ENCODE measurements at regions of chr11 and their contacts with region 1.

Region 1: GRCh38 chr11:62787005-62787759 is at the start of gene TMEM179B:
- DNase-seq: peak; percentile 94
- H3K27ac ChIP-seq: peak within 1 kb of the TSS; percentile 99
- CTCF ChIP-seq: peak; percentile 11

Region 2: DNA sequence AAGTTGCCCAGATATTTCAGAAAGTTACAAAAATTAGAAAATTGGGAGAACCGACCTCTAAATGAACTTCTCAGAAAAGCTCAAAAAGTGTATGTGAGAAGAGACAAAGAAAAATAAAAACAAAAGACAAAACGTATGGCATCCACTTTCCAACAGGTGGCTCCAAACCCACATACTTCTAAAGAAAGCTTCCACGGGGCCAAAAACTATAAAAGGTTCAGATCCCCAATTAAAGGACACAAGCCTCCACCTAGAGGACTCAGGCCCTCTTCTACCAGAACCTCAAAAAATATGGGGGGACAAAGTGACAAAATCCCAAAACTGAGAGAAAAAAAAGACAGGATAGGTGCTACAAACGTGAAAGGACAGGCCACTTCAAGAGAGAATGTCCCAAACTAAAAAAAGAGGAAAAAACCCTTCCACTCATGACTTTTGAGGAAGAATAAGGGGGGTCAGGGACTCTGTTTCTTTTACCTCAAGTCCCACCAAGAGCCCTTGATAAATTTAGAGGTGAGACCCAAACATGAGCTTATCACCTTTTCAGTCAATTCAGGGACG is 569.9 kb before region 1 on chr11:
- CTCF ChIA-PET with region 1: no interaction called
- POLR2A ChIA-PET with region 1: no interaction called
- DNase-seq: peak; percentile 37
- H3K27ac ChIP-seq: no peak overlapping the region
- CTCF ChIP-seq: peak; percentile 45

Region 3: DNA sequence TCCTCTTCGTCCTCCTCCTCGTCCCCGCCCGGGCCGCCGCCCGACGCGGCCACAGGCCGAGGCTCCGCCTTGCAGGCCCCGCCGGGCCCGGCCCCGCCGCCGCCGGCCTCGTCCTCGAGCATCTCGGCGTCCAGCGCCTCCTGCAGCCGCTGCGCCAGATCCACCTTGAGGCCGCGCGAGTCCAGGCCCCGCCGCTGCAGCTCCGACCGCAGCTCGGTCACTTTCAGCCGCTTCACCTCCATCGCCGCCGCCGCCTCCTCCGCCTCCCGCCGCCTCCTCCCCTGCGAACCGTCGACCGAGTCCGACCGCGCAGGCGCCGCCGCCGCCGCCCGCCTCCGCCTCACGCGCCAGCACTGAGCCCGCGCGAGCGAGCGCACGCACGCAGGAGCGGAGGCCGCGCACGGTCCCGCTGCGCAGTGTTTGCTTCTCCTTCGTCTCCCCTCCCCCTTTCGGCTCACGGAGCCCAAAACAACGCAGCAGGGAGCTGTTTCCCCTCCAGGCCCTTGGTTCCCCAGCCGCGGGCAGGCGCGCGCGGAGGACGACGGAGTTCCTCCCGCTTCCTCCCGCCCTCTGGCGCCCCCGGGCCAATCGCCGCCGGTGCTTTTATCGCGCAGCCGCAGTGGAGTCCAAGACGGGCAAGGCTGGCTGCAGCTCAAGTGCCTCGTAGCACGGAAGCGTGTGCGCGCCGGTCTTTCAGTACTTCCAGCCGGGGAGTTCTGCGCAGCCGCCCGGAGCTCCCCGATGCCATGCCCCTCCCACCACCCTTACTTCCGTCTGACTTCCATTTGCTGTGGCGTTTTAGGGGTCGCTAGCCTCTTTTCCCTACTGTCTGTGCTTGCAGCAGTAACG is 60.0 kb before region 1 on chr11 and contains the start of gene HNRNPUL2:
- CTCF ChIA-PET with region 1: interaction called, 16 read pairs
- POLR2A ChIA-PET with region 1: no interaction called
- DNase-seq: peak; percentile 99
- H3K27ac ChIP-seq: peak within 1 kb of the TSS; percentile 99
- CTCF ChIP-seq: no peak

Region 4: DNA sequence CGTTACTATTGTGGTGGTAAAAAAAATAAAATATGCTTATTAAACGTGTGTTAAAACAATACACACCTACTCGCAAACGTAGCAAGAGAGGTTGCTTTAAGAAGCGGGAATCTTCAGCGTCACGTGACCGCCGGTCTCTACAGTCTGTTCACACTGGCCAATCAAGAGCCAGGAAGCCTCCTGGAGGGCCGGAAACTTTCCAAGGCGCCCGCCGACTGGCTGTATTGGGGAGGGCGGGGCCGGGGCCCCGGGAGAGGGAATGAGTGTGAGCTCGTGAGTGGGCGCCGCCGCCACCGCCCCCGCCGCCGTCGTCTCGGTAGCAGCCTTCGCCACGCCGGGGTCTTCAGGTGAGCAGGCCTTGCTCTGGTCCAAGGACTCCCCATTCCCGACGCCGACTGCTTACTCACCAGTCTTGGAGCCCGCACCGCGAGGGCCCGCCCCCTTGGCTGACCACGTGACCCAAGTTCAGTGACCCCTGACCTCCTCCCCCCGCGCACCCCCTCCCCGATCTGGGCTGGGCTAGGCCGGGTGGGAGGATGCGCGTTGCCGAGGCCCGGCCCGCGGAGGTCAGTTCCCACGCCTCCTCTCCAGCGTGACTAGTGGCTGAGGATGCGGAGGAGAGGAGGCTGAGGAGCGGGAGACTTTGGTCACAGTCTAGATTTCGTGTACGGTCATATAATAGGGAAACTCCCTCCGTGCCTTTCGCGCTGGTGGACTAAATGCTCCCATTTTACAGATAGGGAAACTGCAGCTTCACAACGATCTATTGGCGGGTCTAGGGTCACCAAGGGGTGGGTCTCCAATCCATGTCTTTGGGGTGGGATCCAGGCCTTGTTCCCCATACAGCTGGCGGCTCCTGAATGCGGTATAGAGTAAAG is 15.8 kb before region 1 on chr11 and contains the start of gene TAF6L:
- CTCF ChIA-PET with region 1: interaction called, 41 read pairs
- POLR2A ChIA-PET with region 1: no interaction called
- DNase-seq: peak; percentile 98
- H3K27ac ChIP-seq: peak within 1 kb of the TSS; percentile 97
- CTCF ChIP-seq: no peak

Region 5: GRCh38 chr11:62855571-62856332 is 68.6 kb after region 1 on chr11:
- CTCF ChIA-PET with region 1: interaction called, 10 read pairs
- POLR2A ChIA-PET with region 1: interaction called, 5 read pairs
- DNase-seq: peak; percentile 97
- H3K27ac ChIP-seq: peak overlapping the region; percentile 91
- CTCF ChIP-seq: no peak

Region 6: GRCh38 chr11:62863687-62864180 is 76.6 kb after region 1 on chr11:
- CTCF ChIA-PET with region 1: interaction called, 12 read pairs
- POLR2A ChIA-PET with region 1: no interaction called
- DNase-seq: no peak
- H3K27ac ChIP-seq: peak overlapping the region; percentile 28; the same call in 1 of the 2 replicates
- CTCF ChIP-seq: no peak

Region 7: GRCh38 chr11:62880803-62881578 is 93.8 kb after region 1 on chr11 and contains the start of gene SLC3A2:
- CTCF ChIA-PET with region 1: interaction called, 10 read pairs
- POLR2A ChIA-PET with region 1: no interaction called
- DNase-seq: peak; percentile 89
- H3K27ac ChIP-seq: peak within 1 kb of the TSS; percentile 99
- CTCF ChIP-seq: peak; percentile 82

Measured in RWPE1 (cell line).